MCF 10A (cell line): ENCODE measurements at regions of chr21 and their contacts with region 1.

Region 1: DNA sequence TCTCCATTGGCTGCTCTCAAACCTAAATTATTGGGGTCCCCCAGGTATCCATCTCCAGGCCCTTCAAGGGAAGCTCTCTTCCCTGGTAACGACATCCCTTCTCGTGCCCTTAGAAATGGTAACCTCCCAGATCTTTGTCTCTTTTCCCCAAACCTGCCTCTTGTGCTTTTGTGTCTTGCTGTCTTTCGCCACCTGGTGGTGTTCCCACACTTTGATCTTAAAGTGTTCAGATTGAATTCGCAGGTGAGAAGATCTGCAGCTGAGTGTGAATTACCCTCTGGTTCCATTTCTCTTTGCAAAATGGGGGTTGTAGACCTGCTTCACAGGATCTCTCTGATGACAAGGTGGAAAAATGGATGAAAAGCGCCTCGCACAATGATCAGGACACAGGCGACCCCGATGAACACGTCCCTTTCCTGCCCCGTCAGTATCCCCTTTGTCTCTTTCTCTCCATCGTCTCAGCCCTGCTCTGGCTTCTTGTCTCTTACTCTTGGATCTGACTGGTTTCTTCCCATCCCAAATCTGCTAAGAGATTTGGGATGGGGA is 53.1 kb downstream of the DOP1B start:
- DNase-seq: peak; percentile 86
- H3K4me3 Mint-ChIP-seq: peak overlapping the region; percentile 61
- H3K27ac Mint-ChIP-seq: peak overlapping the region; percentile 80
- H3K4me1 Mint-ChIP-seq: peaks cover 16% of the 10 kb centered on the region
- H3K27me3 Mint-ChIP-seq: no peaks in the 10 kb centered on the region
- CTCF ChIP-seq: peak; percentile 50

Region 2: DNA sequence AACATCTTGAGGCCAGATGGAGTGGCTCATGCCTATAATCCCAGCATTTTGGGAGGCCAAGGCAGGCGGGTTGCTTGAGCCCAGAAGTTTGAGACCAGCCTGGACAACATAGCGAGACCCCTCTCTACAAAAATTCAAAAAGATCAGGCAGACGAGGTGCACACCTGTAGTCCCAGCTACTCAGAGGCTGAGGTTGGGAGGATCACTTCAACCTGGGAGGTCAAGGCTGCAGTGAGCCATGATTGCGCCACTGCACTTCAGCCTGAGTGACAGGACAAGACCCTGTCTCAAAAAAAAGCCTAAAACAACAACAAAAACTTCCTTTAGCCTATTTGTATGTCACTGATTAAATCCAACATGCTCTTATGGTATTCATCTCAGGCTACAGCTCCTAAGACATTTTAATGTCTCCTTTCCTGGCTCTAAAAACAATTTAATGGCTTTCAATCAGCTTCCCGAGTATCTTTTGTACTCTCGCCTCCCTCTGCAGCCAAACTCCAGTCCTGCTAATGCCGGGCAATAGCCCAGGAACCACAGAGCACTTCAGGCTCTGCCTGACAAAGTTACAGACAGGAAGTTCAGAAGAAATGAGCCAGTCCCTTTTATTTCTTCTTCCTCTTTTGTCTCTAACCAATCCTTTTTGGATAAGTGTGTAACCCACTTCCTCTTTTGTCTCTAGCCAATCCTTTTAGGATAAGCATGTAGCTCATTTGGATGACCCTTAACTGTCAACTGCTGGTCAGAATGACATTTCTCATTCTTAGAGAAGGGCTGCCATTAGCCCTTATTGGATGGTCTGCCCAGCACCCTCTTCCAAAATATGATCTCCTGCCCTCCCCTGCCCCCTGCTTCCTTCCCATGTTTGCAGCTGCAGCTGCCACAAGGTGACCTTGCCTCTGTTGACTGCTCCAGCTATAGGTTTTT is 59.6 kb before region 1 on chr21:
- CTCF ChIA-PET with region 1: interaction called, 108 read pairs
- POLR2A ChIA-PET with region 1: interaction called, 21 read pairs
- intact Hi-C with region 1: loop called (anchors 1 kb)
- DNase-seq: no peak
- H3K4me3 Mint-ChIP-seq: no peak overlapping the region
- H3K27ac Mint-ChIP-seq: no peak overlapping the region
- H3K4me1 Mint-ChIP-seq: peaks cover 10% of the 10 kb centered on the region
- H3K27me3 Mint-ChIP-seq: no peaks in the 10 kb centered on the region
- CTCF ChIP-seq: no peak

Region 3: DNA sequence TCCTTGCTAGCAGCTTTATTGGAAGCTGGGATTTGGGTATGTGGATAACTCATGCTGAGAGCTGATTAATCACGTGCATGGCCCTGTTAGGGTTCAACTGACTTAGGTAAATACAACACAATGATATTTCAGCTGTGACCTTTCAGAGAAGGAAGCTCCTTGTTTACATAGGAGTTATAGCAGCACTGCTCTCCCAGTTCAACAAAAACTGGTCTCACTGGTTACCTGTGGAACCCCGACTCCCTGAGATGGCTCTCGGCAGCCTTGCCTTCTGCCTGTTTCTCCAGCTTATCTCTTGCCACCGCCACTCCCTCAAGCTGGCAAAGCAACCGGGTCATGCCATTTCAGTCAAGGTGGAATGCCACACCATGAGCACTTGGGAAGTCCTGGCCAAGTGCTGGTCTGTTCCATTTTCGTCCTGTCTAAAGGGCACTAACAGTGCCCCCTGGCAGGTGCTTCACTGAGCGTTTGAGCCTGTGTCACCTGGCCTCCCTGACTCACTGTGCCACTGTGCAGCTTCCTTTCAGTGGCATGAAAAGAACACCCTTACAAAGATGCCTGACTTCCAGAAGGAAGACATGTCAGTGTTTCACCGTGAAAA is 21.5 kb before region 1 on chr21:
- CTCF ChIA-PET with region 1: interaction called, 10 read pairs
- POLR2A ChIA-PET with region 1: interaction called, 3 read pairs
- intact Hi-C with region 1: no loop called
- DNase-seq: no peak
- H3K4me3 Mint-ChIP-seq: no peak overlapping the region
- H3K27ac Mint-ChIP-seq: no peak overlapping the region
- H3K4me1 Mint-ChIP-seq: peaks cover 4% of the 10 kb centered on the region
- H3K27me3 Mint-ChIP-seq: no peaks in the 10 kb centered on the region
- CTCF ChIP-seq: no peak